ENCODE measurements at regions of chr1 and their contacts with region 1.

Region 1: GRCh38 chr1:226223786-226224244 is 351 bp downstream of the MIXL1 start:
- DNase-seq: peak; percentile 34
- H3K4me3 ChIP-seq: peak overlapping the region; percentile 53
- H3K27ac ChIP-seq: no peak overlapping the region
- H3K4me1 ChIP-seq: no peaks in the 10 kb centered on the region
- H3K27me3 ChIP-seq: peaks cover 5% of the 10 kb centered on the region
- CTCF ChIP-seq: peak; percentile 36

Region 2: DNA sequence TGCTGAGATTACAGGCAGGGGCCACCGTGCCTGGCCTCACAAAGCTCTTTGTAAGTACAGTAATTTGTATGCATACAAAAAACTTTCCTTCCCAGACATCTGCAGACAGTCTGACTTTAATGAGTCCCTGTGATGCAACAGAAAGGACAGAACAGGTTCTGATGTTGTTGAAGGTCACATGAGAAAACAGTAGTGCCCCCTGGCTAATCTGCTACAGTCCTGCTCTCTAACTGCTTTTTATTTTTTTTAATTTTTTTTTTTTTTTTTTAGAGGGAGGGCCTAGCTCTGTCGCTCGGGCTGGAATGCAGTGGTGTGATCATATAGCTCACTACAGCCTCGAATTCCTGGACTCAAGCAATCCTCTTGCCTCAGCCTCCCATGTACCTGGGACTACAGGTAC is 74.0 kb before region 1 on chr1:
- CTCF ChIA-PET with region 1: no interaction called
- POLR2A ChIA-PET with region 1: interaction called, 11 read pairs
- intact Hi-C with region 1: no loop called
- DNase-seq: peak; percentile 22
- H3K4me3 ChIP-seq: no peak overlapping the region
- H3K27ac ChIP-seq: no peak overlapping the region
- H3K4me1 ChIP-seq: no peaks in the 10 kb centered on the region
- H3K27me3 ChIP-seq: no peaks in the 10 kb centered on the region
- CTCF ChIP-seq: no peak

Region 3: GRCh38 chr1:226211181-226211821 is 12.5 kb before region 1 on chr1:
- CTCF ChIA-PET with region 1: no interaction called
- POLR2A ChIA-PET with region 1: interaction called, 11 read pairs
- intact Hi-C with region 1: no loop called
- DNase-seq: no peak
- H3K4me3 ChIP-seq: no peak overlapping the region
- H3K27ac ChIP-seq: no peak overlapping the region
- H3K4me1 ChIP-seq: peaks cover 6% of the 10 kb centered on the region
- H3K27me3 ChIP-seq: no peaks in the 10 kb centered on the region
- CTCF ChIP-seq: no peak

Region 4: DNA sequence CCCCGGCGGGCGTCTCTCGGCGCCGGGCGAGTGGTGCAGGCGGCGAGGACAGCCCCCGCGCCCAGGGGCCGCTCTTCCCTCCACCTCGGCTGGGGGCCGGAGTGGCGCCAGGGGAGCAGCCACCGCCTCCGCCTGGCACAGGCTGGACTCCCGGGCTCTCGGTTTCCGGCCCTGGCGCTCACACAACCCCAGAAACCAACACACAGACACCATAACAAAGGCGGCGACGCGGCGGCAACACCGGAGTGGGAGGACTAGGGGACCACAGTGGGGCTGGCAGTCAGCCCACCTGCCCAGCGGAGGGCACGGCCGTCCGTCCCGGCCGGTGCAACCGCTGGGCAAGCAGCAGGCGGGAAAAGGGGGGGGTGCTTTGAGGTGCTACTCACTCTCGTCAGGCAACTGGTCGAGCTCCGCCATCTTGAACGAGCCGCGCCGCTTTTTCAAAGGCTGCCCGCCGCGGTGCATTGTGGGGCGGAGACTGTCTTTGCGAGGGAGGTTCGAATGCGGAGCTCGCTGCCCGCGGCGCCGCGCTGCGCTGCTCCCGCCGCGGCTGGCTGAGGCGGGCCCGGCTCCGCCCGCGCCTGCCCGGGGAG is 85.0 kb after region 1 on chr1 and contains the start of gene LIN9:
- CTCF ChIA-PET with region 1: no interaction called
- POLR2A ChIA-PET with region 1: interaction called, 10 read pairs
- intact Hi-C with region 1: no loop called
- DNase-seq: peak; percentile 96
- H3K4me3 ChIP-seq: peak within 1 kb of the TSS; percentile 99
- H3K27ac ChIP-seq: peak within 1 kb of the TSS; percentile 99
- H3K4me1 ChIP-seq: peaks cover 16% of the 10 kb centered on the region
- H3K27me3 ChIP-seq: no peaks in the 10 kb centered on the region
- CTCF ChIP-seq: no peak
- total RNA-seq, gene LIN9: 20.2 and 20.7 TPM in 2 replicates

Region 5: DNA sequence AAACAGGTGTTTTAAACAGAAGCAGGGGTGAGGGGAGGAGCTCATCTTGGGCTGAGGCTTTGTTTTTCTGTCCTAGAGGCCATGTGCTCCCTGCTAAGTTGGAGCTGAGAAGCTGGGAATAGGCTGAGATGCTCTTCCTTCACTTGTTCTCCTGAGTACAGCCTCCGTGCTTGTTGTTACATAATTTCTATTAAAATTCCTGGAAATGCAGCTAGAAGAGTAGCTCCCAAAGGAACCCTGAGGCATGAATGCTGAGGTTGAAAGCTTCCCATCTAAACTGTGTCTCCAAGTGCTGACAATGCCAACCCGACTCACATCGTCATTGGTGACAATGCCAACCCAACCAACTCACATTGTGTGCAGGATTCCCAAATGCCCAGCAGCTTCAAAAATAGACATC is 527.9 kb after region 1 on chr1:
- CTCF ChIA-PET with region 1: no interaction called
- POLR2A ChIA-PET with region 1: no interaction called
- intact Hi-C with region 1: no loop called
- DNase-seq: no peak
- H3K4me3 ChIP-seq: no peak overlapping the region
- H3K27ac ChIP-seq: no peak overlapping the region
- H3K4me1 ChIP-seq: no peaks in the 10 kb centered on the region
- H3K27me3 ChIP-seq: no peaks in the 10 kb centered on the region
- CTCF ChIP-seq: no peak

Region 6: DNA sequence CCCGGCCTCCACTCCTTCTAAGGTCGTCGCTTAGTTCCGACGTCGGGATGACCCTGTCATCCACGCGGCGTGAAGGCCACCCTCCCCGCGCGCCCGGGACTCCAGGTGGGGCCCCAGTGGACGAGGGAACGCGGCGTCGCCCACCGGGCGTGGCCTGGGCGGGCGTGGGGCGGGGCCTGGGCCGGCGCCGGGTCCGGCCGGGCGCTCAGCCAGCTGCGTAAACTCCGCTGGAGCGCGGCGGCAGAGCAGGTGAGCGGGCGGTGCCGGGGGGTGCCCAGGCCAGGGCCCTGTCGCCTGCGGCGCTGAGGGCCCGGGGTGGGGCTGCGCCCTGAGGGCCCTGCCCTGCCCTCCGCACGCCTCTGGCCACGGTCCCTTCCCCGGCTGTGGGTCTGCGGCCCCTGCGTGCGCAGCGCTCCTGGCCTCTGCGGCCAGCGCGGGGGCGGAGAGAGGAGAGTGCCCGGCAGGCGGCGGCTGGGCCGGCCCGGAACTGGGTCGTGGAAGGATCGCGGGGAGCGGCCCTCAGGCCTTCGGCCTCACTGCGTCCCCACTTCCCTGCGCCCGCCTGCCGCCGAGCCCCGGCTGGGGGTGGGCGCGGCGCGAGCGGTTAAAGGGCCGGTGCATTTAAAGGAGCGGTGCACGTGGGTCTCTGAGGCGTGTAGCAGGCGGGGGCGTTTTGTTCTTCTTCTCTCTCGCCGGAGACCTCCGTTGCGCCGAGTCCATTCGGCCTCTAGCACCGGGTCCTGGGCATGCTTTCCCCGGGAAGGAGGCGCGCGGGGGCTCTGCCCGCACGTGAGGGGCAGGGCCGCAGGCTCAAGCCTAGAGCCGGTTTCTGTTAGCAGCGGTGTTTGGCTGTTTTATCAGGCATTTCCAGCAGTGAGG is 646.8 kb after region 1 on chr1 and contains the start of gene PSEN2:
- CTCF ChIA-PET with region 1: no interaction called
- POLR2A ChIA-PET with region 1: no interaction called
- intact Hi-C with region 1: no loop called
- DNase-seq: peak; percentile 46
- H3K4me3 ChIP-seq: peak within 1 kb of the TSS; percentile 73
- H3K27ac ChIP-seq: no peak within 1 kb of the TSS
- H3K4me1 ChIP-seq: no peaks in the 10 kb centered on the region
- H3K27me3 ChIP-seq: no peaks in the 10 kb centered on the region
- CTCF ChIP-seq: no peak
- total RNA-seq, gene PSEN2: 6.6 and 7.8 TPM in 2 replicates

Measured in A673 (cell line).